Activated CD4-positive, alpha-beta memory T cell treated with anti-CD3 and anti-CD28 coated beads for 36 hours (primary cell): ENCODE measurements at regions of chr9 and their contacts with region 1.

Region 1: DNA sequence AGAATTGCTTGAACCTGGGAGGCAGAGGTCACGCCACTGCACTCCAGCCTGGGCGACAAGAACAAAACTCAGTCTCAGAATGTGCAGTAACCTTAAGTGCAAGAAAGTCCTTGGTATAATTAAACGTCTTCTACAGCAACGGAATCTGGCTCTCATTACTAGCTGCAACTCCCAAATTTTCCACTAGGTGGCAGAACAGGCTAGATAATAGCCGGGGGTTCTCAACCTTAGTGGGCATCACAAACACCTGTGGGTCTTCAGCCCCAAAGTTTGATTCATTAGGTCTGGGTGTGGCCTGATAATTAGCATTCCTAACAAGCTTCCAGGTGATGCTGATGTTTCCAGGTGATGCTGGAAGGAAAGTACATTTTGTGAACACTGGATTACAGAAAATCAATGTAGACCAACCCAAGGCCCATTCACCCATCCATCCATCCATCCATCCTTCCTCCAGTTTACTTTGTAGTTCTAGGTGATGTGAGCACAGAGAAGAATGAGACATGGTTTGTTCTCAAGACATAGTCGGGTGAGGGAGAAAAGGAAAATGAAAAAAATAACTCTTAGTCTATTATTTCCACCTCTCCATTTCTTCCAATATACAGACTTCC is 37.3 kb downstream of the FBXW2 start:
- DNase-seq: peak; percentile 72
- H3K4me3 Mint-ChIP-seq: no peak overlapping the region
- H3K27ac Mint-ChIP-seq: peak overlapping the region; percentile 15
- H3K4me1 Mint-ChIP-seq: peaks cover 22% of the 10 kb centered on the region
- H3K27me3 Mint-ChIP-seq: no peaks in the 10 kb centered on the region

Region 2: DNA sequence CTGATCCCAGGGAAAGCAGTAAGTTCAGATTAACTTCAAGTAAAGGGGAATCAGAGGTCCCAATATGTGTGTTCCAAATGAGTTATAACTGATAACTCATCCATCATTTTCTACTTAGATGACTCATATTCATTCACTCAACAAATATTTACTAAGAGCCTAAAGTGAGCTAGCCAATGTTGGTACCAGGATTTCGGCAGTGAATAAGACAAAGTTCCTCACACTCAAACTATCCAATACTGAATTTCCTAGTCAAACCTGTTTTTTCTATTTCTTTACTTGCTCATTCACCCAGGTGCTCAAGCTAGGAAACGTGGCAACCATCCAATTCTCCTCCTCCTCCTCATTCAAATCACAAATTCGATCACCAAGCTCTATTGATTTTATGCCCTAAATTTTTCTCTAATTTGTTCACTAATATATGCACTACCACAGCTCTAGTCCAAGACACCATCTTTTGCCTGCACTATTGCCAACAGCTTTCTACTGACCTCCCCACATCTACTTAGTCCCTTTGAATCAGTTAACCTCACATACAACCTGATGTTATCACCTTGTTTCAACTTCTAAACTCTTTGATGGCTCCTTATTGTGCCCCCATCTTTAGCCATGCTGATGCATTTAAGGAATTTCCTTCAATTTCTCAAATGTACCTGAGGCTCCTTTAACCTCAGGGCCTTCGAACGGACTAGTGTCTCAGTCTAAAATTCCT is 11.7 kb after region 1 on chr9:
- CTCF ChIA-PET with region 1: interaction called, 17 read pairs
- POLR2A ChIA-PET with region 1: no interaction called
- intact Hi-C with region 1: no loop called
- DNase-seq: no peak
- H3K4me3 Mint-ChIP-seq: no peak overlapping the region
- H3K27ac Mint-ChIP-seq: peak overlapping the region; percentile 38
- H3K4me1 Mint-ChIP-seq: peaks cover 20% of the 10 kb centered on the region
- H3K27me3 Mint-ChIP-seq: no peaks in the 10 kb centered on the region

Region 3: DNA sequence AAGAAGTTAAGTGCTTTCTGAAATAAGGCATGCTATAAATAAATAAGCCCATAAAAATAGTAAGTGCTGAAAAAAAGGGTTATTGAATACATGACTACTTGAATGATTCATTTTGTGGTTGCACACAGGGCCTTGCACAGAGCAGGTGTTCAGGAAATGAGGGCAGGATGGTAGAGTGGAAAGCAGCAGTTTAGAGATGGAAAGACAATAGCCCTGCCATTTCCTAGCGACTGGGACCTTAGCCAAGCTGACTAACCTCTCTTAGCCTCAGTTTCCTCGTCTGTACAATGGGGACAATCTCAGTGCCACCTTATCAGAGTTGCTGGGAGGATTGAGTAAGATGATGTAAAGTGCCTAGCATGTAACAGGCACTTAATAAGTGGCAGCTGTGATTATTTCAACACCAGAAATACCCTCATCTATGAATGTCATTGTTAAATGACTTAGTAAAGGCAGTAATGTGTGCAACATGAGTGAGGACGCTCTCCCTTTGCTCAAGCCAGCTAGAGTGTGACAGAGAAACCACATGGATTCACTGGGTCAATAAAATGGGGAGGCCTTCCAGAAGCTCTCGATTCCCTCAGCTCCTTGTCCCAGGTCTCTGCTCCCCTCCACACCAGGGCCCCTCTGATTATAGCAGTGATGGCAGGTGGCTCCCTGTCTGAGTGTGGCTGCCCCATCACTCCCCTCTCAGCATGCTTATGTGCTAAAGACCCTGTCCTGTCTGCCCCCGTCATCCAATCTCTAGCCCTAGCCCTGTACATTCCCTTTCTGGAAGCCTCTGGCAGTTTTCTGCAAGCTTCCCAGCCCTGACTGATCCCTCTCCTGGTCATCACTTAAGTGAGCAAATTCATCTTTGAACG is 137.0 kb after region 1 on chr9:
- CTCF ChIA-PET with region 1: interaction called, 10 read pairs
- POLR2A ChIA-PET with region 1: no interaction called
- intact Hi-C with region 1: loop called (anchors 5 kb)
- DNase-seq: peak; percentile 81
- H3K4me3 Mint-ChIP-seq: peak overlapping the region; percentile 62
- H3K27ac Mint-ChIP-seq: peak overlapping the region; percentile 95
- H3K4me1 Mint-ChIP-seq: peaks cover 84% of the 10 kb centered on the region
- H3K27me3 Mint-ChIP-seq: no peaks in the 10 kb centered on the region

Region 4: DNA sequence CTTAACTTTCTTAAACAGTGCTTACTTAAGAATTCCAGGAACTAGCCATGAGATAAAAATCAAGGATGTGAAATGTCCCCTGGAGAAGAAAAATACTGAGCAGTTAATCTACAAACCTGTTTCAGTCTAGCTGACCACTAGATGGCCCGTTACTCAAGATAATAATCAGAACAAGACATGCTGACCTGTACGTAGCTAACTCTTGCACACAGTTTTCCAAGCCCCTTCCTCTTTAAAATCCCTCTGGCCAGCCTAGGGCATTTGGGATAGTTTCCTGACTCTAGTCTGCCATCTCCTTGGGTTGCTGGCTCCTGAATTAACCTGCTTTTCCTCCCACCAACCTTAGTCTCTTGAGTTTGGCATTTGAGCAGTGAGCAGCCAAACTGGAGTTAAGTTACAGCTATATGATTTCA is 229.9 kb after region 1 on chr9:
- CTCF ChIA-PET with region 1: interaction called, 21 read pairs
- POLR2A ChIA-PET with region 1: no interaction called
- intact Hi-C with region 1: no loop called
- DNase-seq: no peak
- H3K4me3 Mint-ChIP-seq: no peak overlapping the region
- H3K27ac Mint-ChIP-seq: no peak overlapping the region
- H3K4me1 Mint-ChIP-seq: no peaks in the 10 kb centered on the region
- H3K27me3 Mint-ChIP-seq: no peaks in the 10 kb centered on the region

Region 5: DNA sequence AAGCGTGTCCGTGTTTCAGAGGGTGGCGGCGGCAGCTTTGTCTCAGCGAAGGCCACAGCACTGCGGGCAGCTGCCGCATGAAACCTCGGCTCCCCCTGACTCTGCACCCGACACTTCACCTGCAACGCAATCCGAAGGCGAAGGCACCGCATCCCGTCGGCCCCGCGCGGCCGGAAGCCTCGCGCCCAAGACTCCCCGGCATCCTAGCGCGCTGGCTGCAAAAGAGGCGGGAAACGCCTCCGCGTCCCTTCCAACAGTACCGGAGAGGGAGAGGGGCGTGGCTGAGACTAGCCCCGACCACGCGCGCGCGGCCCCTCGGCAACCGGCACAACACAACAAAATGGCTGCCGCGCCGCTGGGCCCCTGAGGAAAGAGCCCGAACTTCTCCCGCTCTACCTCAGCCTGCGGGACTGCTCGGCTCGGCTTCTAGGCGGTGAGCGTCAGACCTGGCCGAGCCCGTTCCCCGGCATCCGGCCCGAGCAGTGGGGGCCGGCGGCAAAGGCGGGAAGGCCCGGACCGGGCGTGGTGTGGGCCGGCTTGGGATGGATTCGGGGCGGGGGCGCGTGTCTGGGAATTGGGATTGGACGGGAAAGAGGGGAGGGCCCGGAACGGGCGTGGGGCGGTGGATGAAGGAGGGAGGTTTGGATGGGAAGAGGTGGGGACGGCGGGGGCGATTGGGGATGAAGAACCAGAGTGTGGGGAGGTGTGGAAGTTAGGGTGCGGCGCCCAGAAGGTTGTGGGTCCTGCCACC is 318.9 kb after region 1 on chr9 and contains the start of gene CNTRL:
- CTCF ChIA-PET with region 1: interaction called, 10 read pairs
- POLR2A ChIA-PET with region 1: no interaction called
- intact Hi-C with region 1: no loop called
- DNase-seq: peak; percentile 97
- H3K4me3 Mint-ChIP-seq: peak within 1 kb of the TSS; percentile 100
- H3K27ac Mint-ChIP-seq: peak within 1 kb of the TSS; percentile 85
- H3K4me1 Mint-ChIP-seq: peaks cover 46% of the 10 kb centered on the region
- H3K27me3 Mint-ChIP-seq: no peaks in the 10 kb centered on the region
- total RNA-seq, gene CNTRL: 60.0 to 65.1 TPM